Endothelial cell of umbilical vein (primary cell): ENCODE measurements at regions of chr1 and their contacts with region 1.

Region 1: DNA sequence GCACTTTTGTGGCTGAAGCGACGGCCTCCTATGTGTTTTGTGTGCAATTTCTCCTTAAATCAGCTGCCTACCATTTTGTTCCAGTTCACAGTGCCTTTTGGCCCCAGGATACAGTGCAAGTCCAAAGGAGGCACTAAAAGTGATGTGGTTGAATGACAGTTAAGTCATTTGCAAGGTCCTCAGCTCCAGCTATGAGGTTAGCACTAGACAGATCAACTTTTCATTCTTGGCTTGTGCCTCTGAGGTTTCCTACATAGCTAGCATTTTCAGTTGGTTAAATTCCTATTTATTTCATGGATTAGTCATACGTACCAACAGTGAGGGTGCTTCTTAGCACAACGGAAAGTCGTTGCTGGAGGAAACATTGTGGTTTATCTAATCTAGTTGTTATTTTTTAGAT is 59.3 kb upstream of the NTPCR start:
- DNase-seq: no peak
- H3K4me3 ChIP-seq: no peak overlapping the region
- H3K27ac ChIP-seq: no peak overlapping the region
- H3K4me1 ChIP-seq: no peaks in the 10 kb centered on the region
- H3K27me3 ChIP-seq: no peaks in the 10 kb centered on the region
- CTCF ChIP-seq: no peak
- POLR2A ChIP-seq: no peak

Region 2: DNA sequence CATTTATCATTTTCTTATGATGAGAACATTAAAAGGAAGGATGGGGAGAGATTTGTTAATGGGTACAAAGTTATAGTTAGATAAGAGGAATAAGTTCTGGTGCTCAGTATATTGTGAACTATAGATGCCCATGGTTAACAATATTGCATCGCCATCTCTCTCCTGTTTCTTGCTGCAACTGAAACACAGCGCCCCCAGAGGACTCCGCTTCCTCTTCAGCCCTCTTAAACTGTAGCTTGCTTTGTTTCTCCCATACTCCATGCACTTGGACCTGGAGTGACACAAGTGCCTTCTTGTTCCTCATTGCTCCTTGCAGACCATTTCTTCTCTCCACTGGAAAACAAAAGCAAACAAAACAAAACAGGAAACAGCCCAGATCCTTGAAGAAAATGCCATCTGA is 10.7 kb before region 1 on chr1:
- CTCF ChIA-PET with region 1: interaction called, 19 read pairs
- POLR2A ChIA-PET with region 1: no interaction called
- dilution Hi-C with region 1: no loop called
- intact Hi-C with region 1: no loop called
- DNase-seq: peak; percentile 26
- H3K4me3 ChIP-seq: no peak overlapping the region
- H3K27ac ChIP-seq: no peak overlapping the region
- H3K4me1 ChIP-seq: no peaks in the 10 kb centered on the region
- H3K27me3 ChIP-seq: no peaks in the 10 kb centered on the region
- CTCF ChIP-seq: peak; percentile 36 to 62
- POLR2A ChIP-seq: no peak